Posterior vena cava (tissue), 2 donors: ENCODE measurements at regions of chr2 and their contacts with region 1.

Region 1: GRCh38 chr2:69973335-69973735 is 11.9 kb upstream of the ASPRV1 start:
- DNase-seq: peak; percentile 20

Region 2: GRCh38 chr2:68536000-68536399 is 1437.3 kb before region 1 on chr2:
- intact Hi-C with region 1: no loop called
- DNase-seq: no peak

Region 3: DNA sequence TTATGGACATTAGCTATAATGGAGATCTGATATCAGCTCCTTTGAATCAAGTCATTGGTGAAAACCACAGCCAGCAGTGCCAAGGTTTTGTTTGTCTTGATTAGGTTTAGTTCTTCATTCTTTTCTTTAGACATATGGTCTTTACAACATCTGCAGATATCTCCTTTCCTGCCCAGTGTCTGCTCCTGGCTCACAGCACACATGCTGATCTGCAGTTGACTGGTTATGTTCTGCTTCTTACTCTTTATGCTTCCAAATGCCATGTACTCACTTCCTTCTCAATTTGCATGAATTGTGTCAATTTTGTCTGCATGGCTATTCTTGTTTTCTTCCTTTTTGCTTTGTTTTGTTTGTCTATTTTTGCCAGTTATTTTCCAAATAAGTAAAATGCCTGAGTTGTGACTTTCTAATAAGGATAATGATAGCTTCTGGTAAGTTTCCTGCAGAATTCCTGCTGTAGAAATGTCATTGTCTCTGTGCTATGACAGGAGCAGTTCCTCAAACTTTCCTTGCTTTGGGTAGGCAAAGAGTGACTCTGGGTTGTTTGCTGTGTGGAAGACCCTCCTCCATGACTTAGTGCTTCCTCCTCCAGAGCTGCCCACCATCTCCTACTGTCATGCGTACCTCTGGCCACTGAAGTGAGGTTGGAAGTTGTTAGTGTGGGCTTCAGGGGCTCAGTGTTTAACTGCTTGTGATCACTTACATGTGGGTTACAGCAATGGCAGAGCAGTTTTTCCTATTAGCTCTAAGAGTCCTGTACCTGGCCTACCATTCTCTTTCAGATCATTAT is 1230.5 kb before region 1 on chr2:
- intact Hi-C with region 1: loop called in 1 of 2 experiments (anchors 10 kb)
- DNase-seq: no peak

Region 4: DNA sequence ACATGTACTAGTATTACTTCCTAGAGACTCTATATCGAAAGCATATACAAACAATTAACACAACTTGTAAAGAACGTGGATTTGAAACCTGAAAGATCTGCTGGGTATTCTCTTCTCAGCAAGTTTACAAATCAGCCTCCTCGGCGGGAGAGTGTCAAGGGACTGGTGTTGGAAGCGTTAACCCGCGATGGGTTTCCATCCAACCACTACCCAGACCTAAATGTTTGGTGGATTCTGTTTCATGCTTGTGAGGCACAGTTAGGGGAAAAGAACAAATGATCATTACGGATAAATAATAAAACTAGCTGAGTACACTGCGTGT is 216.7 kb after region 1 on chr2:
- intact Hi-C with region 1: no loop called
- DNase-seq: peak; percentile 56